H1 (cell line): ENCODE measurements at regions of chr1 and their contacts with region 1.

Region 1: GRCh38 chr1:115138968-115139367 is 49.7 kb upstream of the TSPAN2 start:
- DNase-seq: peak; percentile 82 to 86
- H3K4me3 ChIP-seq: no peak overlapping the region
- H3K27ac ChIP-seq: no peak overlapping the region
- H3K4me1 ChIP-seq: peaks cover 0 to 2% (median 0%) of the 10 kb centered on the region in 4 experiments; a peak in 2 of 7 replicates
- H3K27me3 ChIP-seq: no peaks in the 10 kb centered on the region
- CTCF ChIP-seq: peak; percentile 89 to 93 (median 89)
- EP300 ChIP-seq: no peak
- POLR2A ChIP-seq: no peak
- RAD21 ChIP-seq: peak; percentile 94 to 95

Region 2: GRCh38 chr1:115123116-115123515 is 15.9 kb before region 1 on chr1:
- CTCF ChIA-PET with region 1: interaction called, 54 read pairs
- POLR2A ChIA-PET with region 1: no interaction called
- DNase-seq: no peak
- H3K4me3 ChIP-seq: no peak overlapping the region
- H3K27ac ChIP-seq: no peak overlapping the region
- H3K4me1 ChIP-seq: no peaks in the 10 kb centered on the region
- H3K27me3 ChIP-seq: no peaks in the 10 kb centered on the region
- CTCF ChIP-seq: no peak
- EP300 ChIP-seq: no peak
- POLR2A ChIP-seq: no peak
- RAD21 ChIP-seq: no peak

Region 3: GRCh38 chr1:115179397-115179835 is 40.4 kb after region 1 on chr1:
- CTCF ChIA-PET with region 1: interaction called, 125 read pairs
- POLR2A ChIA-PET with region 1: no interaction called
- DNase-seq: no peak
- H3K4me3 ChIP-seq: no peak overlapping the region
- H3K27ac ChIP-seq: no peak overlapping the region
- H3K4me1 ChIP-seq: no peaks in the 10 kb centered on the region
- H3K27me3 ChIP-seq: no peaks in the 10 kb centered on the region
- CTCF ChIP-seq: no peak
- EP300 ChIP-seq: no peak
- POLR2A ChIP-seq: no peak
- RAD21 ChIP-seq: no peak

Region 4: GRCh38 chr1:115246526-115246925 is 107.6 kb after region 1 on chr1:
- CTCF ChIA-PET with region 1: no interaction called
- POLR2A ChIA-PET with region 1: no interaction called
- DNase-seq: no peak
- H3K4me3 ChIP-seq: no peak overlapping the region
- H3K27ac ChIP-seq: no peak overlapping the region
- H3K4me1 ChIP-seq: no peaks in the 10 kb centered on the region
- H3K27me3 ChIP-seq: peaks cover 0 to 1% (median 0%) of the 10 kb centered on the region in 4 experiments; a peak in 1 of 7 replicates
- CTCF ChIP-seq: no peak
- EP300 ChIP-seq: no peak
- POLR2A ChIP-seq: no peak
- RAD21 ChIP-seq: no peak

Region 5: GRCh38 chr1:115463363-115463746 is 324.4 kb after region 1 on chr1:
- CTCF ChIA-PET with region 1: interaction called, 123 read pairs
- POLR2A ChIA-PET with region 1: no interaction called
- DNase-seq: peak in 1 of 2 experiments; percentile 20
- H3K4me3 ChIP-seq: no peak overlapping the region
- H3K27ac ChIP-seq: no peak overlapping the region
- H3K4me1 ChIP-seq: no peaks in the 10 kb centered on the region
- H3K27me3 ChIP-seq: no peaks in the 10 kb centered on the region
- CTCF ChIP-seq: no peak
- EP300 ChIP-seq: no peak
- POLR2A ChIP-seq: no peak
- RAD21 ChIP-seq: peak; percentile 29 to 43; a peak in 3 of 4 replicates

Region 6: GRCh38 chr1:115469703-115470476 is 330.9 kb after region 1 on chr1:
- CTCF ChIA-PET with region 1: interaction called, 123 read pairs
- POLR2A ChIA-PET with region 1: interaction called, 3 read pairs
- DNase-seq: peak; percentile 50 to 90
- H3K4me3 ChIP-seq: no peak overlapping the region
- H3K27ac ChIP-seq: no peak overlapping the region
- H3K4me1 ChIP-seq: no peaks in the 10 kb centered on the region
- H3K27me3 ChIP-seq: no peaks in the 10 kb centered on the region
- CTCF ChIP-seq: peak; percentile 96 to 100 (median 98)
- EP300 ChIP-seq: no peak
- POLR2A ChIP-seq: no peak
- RAD21 ChIP-seq: peak; percentile 99

Region 7: GRCh38 chr1:115476616-115477015 is 337.6 kb after region 1 on chr1:
- CTCF ChIA-PET with region 1: interaction called, 123 read pairs
- POLR2A ChIA-PET with region 1: no interaction called
- DNase-seq: no peak
- H3K4me3 ChIP-seq: no peak overlapping the region
- H3K27ac ChIP-seq: no peak overlapping the region
- H3K4me1 ChIP-seq: no peaks in the 10 kb centered on the region; a peak in 1 of 7 replicates
- H3K27me3 ChIP-seq: no peaks in the 10 kb centered on the region
- CTCF ChIP-seq: peak in 2 of 3 experiments; percentile 27; a peak in 2 of 4 replicates
- EP300 ChIP-seq: no peak
- POLR2A ChIP-seq: no peak
- RAD21 ChIP-seq: peak; percentile 33 to 48